ENCODE measurements at regions of chr17 and their contacts with region 1.

Region 1: DNA sequence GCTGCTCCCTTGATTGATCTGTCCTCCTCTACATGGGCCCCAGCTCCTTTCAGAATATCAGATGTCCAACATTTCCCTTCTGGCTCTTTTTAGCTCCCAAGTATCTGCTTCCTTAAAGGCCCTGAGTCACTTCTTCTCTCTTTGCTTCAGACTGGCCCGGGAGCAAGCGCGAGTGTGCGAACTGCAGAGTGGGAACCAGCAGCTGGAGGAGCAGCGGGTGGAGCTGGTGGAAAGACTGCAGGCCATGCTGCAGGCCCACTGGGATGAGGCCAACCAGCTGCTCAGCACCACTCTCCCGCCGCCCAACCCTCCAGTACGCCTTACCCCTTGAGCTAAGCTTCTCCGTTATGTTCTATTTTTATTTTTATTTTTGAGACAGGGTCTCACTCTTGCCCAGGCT is 12.3 kb downstream of the CNTROB start:
- DNase-seq: no peak
- ATAC-seq: no peak
- H3K4me3 Mint-ChIP-seq: no peak overlapping the region
- H3K27ac Mint-ChIP-seq: no peak overlapping the region
- H3K4me1 Mint-ChIP-seq: no peaks in the 10 kb centered on the region
- H3K27me3 Mint-ChIP-seq: no peaks in the 10 kb centered on the region
- CTCF ChIP-seq: no peak

Region 2: GRCh38 chr17:7732981-7733539 is 211.3 kb before region 1 on chr17:
- CTCF ChIA-PET with region 1: no interaction called
- POLR2A ChIA-PET with region 1: no interaction called
- intact Hi-C with region 1: no loop called
- DNase-seq: no peak
- ATAC-seq: no peak
- H3K4me3 Mint-ChIP-seq: no peak overlapping the region
- H3K27ac Mint-ChIP-seq: no peak overlapping the region
- H3K4me1 Mint-ChIP-seq: no peaks in the 10 kb centered on the region
- H3K27me3 Mint-ChIP-seq: peaks cover 1% of the 10 kb centered on the region
- CTCF ChIP-seq: no peak

Region 3: DNA sequence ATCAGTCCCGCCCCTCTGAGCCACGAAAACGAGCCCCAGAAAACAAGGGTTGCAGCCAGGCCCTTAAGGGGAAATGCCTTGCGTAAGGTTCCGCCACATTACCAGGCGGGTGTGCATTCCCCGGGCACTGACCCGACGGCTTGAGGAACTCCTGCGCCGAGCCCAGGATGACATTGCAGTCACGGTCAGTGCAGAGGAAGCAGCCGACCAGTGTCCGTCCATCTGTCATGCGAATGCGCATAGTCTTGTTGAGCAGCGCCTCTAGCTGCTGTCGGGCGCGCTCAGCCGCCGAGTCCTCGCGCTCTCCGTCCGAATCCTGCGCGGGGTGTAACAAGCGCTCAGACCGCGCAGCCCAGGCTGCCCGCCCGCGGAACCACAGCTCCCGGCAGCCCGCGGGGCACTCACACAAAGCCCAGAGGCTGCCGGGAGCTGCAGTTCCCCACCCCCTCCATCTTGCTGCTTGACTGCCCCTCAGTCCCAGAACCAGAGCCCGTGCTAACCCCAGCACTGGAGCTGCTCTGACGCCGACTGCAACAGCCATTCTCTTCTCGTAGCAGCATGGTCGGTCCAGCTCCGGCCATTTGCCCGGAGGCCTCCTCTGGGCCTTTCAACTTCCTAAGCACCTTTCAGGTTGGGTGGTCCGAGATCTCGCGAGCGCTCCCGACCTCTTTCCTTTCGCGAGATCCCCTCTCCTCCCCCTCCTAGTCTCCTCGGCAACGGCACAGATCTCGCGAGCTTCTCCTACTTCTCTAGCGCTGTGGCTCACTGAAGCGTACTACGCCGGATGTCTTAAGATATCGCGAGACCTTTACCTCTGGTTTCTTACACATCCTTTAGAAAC is 87.2 kb before region 1 on chr17 and contains the start of gene NAA38:
- CTCF ChIA-PET with region 1: no interaction called
- POLR2A ChIA-PET with region 1: no interaction called
- intact Hi-C with region 1: no loop called
- DNase-seq: peak; percentile 98
- ATAC-seq: peak; percentile 90
- H3K4me3 Mint-ChIP-seq: no peak within 1 kb of the TSS
- H3K27ac Mint-ChIP-seq: no peak within 1 kb of the TSS
- H3K4me1 Mint-ChIP-seq: peaks cover 33% of the 10 kb centered on the region
- H3K27me3 Mint-ChIP-seq: no peaks in the 10 kb centered on the region
- CTCF ChIP-seq: no peak
- total RNA-seq, gene NAA38: 72.8 to 77.2 TPM

Region 4: DNA sequence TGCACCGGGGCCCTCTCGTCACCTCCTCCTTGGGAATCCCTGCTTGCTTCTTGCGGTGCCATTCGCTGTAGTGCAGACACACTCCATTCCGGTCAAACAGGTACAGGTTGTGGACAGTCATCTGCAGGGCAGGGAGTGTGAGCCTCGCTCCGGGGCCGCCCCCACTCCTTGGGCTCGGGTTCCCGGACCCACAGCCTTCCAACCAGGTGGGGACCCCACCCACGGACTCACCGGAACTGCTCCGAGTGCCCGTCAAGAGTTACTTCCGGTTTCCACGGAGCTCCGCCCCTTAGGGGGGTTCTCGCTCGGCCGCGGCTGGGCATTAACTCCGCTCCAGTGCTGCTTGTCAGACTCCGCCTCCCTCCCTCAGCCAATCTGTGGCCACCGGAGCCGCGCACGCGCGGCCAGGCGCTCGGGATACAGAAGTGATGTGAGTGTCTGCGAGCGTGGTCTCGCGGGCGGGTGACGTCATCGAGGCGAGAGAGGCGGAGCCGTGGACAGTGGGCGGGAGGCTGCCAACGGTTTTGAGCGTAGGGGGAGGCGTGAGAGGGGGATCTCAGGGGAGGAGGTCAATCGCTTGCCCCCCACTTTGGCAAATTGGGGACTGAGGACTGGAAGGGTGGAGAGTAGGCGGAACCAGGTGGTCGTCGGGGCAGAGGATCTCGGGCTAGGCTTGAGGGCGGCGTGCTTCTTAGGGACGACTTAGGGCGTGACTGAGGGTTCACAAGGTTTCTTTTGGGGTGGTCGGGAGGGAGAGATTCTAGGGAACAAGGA is 12.4 kb before region 1 on chr17 and contains the starts of genes CNTROB and TRAPPC1:
- CTCF ChIA-PET with region 1: interaction called, 9 read pairs
- POLR2A ChIA-PET with region 1: interaction called, 16 read pairs
- intact Hi-C with region 1: no loop called
- DNase-seq: peak; percentile 99
- ATAC-seq: peak; percentile 99
- H3K4me3 Mint-ChIP-seq: peak within 1 kb of the TSS; percentile 87
- H3K27ac Mint-ChIP-seq: peak within 1 kb of the TSS; percentile 94
- H3K4me1 Mint-ChIP-seq: peaks cover 40% of the 10 kb centered on the region
- H3K27me3 Mint-ChIP-seq: no peaks in the 10 kb centered on the region
- CTCF ChIP-seq: no peak
- total RNA-seq, gene CNTROB: 48.4 to 54.1 TPM
- total RNA-seq, gene TRAPPC1: 140 to 143 TPM

Measured in activated CD8-positive, alpha-beta T cell treated with anti-CD3 and anti-CD28 coated beads for 36 hours (primary cell).